ENCODE measurements at regions of chr1 and their contacts with region 1.

Region 1: DNA sequence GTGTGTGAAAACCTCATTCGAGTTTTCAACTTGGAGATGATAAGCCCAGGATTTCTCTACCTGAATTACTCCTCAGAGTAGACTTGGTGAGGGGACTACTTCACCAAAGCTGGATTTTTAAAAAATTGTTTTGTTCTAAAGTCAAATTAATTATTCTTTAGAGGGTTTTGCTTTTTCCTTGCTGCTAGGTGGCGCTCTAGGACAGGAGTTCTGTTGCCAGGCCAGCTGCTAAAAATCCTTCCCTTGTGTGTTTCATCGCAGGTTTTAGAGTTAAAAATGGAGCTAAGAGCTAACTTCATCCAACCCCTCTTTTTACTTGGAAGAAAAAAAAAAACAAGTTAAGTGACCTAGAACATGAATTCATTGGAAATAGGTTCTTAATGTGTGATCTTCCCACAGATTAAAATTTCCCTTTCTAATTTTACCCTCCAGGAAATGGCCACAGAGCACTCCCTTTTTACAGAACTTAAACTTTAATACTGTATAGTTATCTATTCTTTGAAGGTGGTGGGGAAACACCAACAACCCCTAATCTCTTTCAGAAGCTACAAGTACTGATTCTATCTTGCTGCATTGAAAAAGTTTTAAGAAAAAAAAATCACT is 36.7 kb upstream of the FAM163A start:
- DNase-seq: peak; percentile 78
- H3K4me3 Mint-ChIP-seq: no peak overlapping the region
- H3K27ac Mint-ChIP-seq: no peak overlapping the region
- H3K4me1 Mint-ChIP-seq: no peaks in the 10 kb centered on the region
- H3K27me3 Mint-ChIP-seq: peaks cover 18% of the 10 kb centered on the region
- CTCF ChIP-seq: peak; percentile 92

Region 2: DNA sequence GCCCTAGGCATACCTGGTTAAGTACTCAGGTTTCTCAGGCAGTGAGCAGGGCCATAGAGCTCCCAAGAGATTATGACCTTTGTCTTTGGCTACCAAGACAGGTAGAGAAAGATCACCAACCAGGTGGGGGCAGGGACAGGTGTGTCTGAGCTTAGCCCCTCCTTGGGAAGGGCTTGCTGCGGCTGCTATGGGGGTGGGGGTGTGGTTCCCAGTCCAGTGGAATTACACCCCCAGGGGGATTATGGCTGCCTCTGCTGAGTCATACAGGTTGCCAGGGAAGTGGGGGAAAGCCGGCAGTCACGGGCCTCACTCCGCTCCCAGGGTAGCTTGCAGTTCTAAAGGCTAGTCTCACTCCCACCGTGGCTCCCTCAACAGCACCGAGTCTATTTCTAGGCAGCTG is 28.5 kb before region 1 on chr1:
- CTCF ChIA-PET with region 1: interaction called, 13 read pairs
- POLR2A ChIA-PET with region 1: no interaction called
- intact Hi-C with region 1: no loop called
- DNase-seq: peak; percentile 10
- H3K4me3 Mint-ChIP-seq: no peak overlapping the region
- H3K27ac Mint-ChIP-seq: no peak overlapping the region
- H3K4me1 Mint-ChIP-seq: no peaks in the 10 kb centered on the region
- H3K27me3 Mint-ChIP-seq: peaks cover 65% of the 10 kb centered on the region
- CTCF ChIP-seq: no peak

Region 3: GRCh38 chr1:179728271-179728670 is 21.8 kb after region 1 on chr1:
- CTCF ChIA-PET with region 1: interaction called, 40 read pairs
- POLR2A ChIA-PET with region 1: no interaction called
- intact Hi-C with region 1: no loop called
- DNase-seq: no peak
- H3K4me3 Mint-ChIP-seq: no peak overlapping the region
- H3K27ac Mint-ChIP-seq: no peak overlapping the region
- H3K4me1 Mint-ChIP-seq: no peaks in the 10 kb centered on the region
- H3K27me3 Mint-ChIP-seq: no peaks in the 10 kb centered on the region
- CTCF ChIP-seq: no peak

Region 4: DNA sequence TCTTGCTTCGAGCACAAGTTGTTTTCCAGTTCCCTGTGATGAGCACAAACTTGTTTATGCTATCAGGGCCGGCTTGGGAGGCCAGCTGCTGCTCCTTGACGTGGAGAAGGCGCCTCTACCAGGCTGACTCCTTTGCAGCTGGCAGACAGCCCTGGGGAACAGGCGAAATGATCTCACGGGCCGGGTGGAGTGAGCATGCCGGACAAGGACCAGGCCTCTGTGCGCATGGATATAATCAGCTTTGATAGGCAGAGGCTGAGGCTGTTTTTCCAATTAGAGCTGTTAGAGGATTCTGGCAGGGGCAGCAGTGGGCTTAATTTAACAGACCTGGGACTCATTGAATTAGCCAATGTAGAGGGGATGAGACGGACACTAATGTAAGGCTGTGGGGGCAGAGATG is 75.5 kb after region 1 on chr1:
- CTCF ChIA-PET with region 1: interaction called, 13 read pairs
- POLR2A ChIA-PET with region 1: no interaction called
- intact Hi-C with region 1: no loop called
- DNase-seq: no peak
- H3K4me3 Mint-ChIP-seq: no peak overlapping the region
- H3K27ac Mint-ChIP-seq: no peak overlapping the region
- H3K4me1 Mint-ChIP-seq: no peaks in the 10 kb centered on the region
- H3K27me3 Mint-ChIP-seq: no peaks in the 10 kb centered on the region
- CTCF ChIP-seq: no peak

Region 5: DNA sequence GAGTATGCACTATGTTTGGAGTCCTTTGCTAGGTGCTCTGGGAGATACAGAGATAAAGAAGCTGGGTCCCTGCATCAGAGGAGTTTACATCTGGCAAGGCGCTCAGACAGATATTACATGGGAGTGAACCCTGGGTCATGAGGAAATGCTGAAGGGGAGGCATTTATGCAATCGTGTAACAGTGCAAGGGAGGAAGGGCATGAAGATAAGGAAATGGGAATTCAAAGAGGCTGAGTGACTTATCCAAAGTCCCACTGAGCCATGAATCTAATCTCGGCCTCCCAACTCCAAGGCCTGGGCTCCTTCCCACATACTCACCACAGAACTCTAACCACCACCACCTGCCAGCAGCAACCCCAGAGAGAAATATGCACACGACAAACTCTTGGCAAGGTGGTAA is 88.2 kb after region 1 on chr1:
- CTCF ChIA-PET with region 1: interaction called, 29 read pairs
- POLR2A ChIA-PET with region 1: no interaction called
- intact Hi-C with region 1: no loop called
- DNase-seq: no peak
- H3K4me3 Mint-ChIP-seq: no peak overlapping the region
- H3K27ac Mint-ChIP-seq: no peak overlapping the region
- H3K4me1 Mint-ChIP-seq: no peaks in the 10 kb centered on the region
- H3K27me3 Mint-ChIP-seq: no peaks in the 10 kb centered on the region
- CTCF ChIP-seq: no peak

Region 6: GRCh38 chr1:180033390-180033789 is 326.9 kb after region 1 on chr1:
- CTCF ChIA-PET with region 1: no interaction called
- POLR2A ChIA-PET with region 1: no interaction called
- intact Hi-C with region 1: no loop called
- DNase-seq: no peak
- H3K4me3 Mint-ChIP-seq: no peak overlapping the region
- H3K27ac Mint-ChIP-seq: no peak overlapping the region
- H3K4me1 Mint-ChIP-seq: peaks cover 13% of the 10 kb centered on the region
- H3K27me3 Mint-ChIP-seq: no peaks in the 10 kb centered on the region
- CTCF ChIP-seq: no peak

Measured in MCF 10A (cell line).